IMR-90 (cell line): ENCODE measurements at regions of chr3 and their contacts with region 1.

Region 1: GRCh38 chr3:168341192-168341815 is 245.6 kb upstream of the GOLIM4 start:
- DNase-seq: peak; percentile 91
- ATAC-seq: peak; percentile 76
- H3K4me3 ChIP-seq: no peak overlapping the region
- H3K27ac ChIP-seq: no peak overlapping the region
- H3K4me1 ChIP-seq: peaks cover 10% of the 10 kb centered on the region
- H3K27me3 ChIP-seq: no peaks in the 10 kb centered on the region
- CTCF ChIP-seq: no peak
- POLR2A ChIP-seq: no peak
- RAD21 ChIP-seq: no peak

Region 2: GRCh38 chr3:168425936-168426595 is 84.8 kb after region 1 on chr3:
- CTCF ChIA-PET with region 1: no interaction called
- POLR2A ChIA-PET with region 1: no interaction called
- dilution Hi-C with region 1: no loop called
- in situ Hi-C with region 1: no loop called
- intact Hi-C with region 1: loop called (anchors 5 kb)
- DNase-seq: peak; percentile 52
- ATAC-seq: no peak
- H3K4me3 ChIP-seq: no peak overlapping the region
- H3K27ac ChIP-seq: no peak overlapping the region
- H3K4me1 ChIP-seq: peaks cover 8% of the 10 kb centered on the region
- H3K27me3 ChIP-seq: peaks cover 2% of the 10 kb centered on the region
- CTCF ChIP-seq: no peak
- POLR2A ChIP-seq: no peak
- RAD21 ChIP-seq: no peak